Heart left ventricle (tissue), 16 donors: ENCODE measurements at regions of chr2 and their contacts with region 1.

Region 1: DNA sequence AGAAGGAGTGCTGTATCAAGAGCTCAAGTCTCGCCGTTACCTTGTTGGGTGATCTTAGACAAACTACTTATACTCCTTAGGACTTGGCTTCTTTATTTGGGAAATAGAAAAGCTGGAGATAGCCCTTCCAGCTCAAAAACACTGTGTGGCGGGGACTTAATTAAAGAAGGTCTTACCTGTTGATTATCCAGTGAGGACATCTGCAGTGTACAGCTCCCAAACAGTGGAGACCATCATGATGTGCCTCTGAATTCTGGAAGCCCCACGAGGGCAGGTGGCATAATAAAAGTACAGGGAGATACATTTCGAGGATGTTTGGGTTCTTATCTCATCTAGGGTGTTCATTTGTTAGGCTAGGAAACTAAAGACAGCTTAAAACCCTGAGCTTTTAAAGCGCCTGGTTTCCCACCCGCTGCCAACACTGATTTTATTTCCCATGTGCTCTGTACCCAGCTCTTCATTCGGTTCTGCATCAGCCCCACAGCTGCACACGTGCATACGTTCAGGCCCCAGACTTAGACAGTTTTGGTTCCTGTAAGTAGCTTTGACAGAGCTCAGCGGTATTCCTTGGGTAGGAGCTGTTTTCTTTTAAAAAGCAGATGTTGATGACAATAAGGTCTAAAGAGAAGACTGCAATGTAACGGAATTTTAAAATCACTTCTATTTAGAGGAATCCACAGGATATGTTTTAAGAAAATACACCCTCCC is 80.5 kb upstream of the SIX2 start:
- DNase-seq: no peak
- ATAC-seq: no peak
- H3K4me3 ChIP-seq: no peak overlapping the region
- H3K27ac ChIP-seq: no peak overlapping the region
- H3K4me1 ChIP-seq: no peaks in the 10 kb centered on the region
- H3K27me3 ChIP-seq: peaks cover 0 to 12% (median 0%) of the 10 kb centered on the region in 9 donors
- CTCF ChIP-seq: no peak
- POLR2A ChIP-seq: no peak

Region 2: DNA sequence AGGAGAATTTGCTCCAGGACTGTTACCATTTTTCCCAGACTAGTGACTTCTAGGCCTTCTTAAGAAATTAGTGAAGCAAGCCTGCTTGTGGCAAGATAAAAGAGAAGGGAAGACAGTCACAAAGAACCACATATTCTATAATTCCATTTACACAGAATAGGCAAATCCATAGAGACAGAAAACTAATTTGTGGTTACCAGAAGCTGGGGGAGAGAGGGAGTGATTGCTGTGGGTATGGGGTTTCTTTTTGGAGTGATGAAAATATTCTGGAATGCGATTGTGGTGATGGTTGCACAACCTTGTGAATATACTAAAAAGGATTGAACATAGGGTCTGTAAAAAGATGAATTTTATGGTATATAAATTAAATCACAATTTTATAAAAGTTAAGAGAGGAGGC is 42.9 kb before region 1 on chr2:
- intact Hi-C with region 1: loop called in 1 of 10 experiments (anchors 10 kb)
- DNase-seq: no peak
- ATAC-seq: no peak
- H3K4me3 ChIP-seq: no peak overlapping the region
- H3K27ac ChIP-seq: no peak overlapping the region
- H3K4me1 ChIP-seq: no peaks in the 10 kb centered on the region
- H3K27me3 ChIP-seq: peaks cover 0 to 29% (median 0%) of the 10 kb centered on the region in 9 donors
- CTCF ChIP-seq: no peak
- POLR2A ChIP-seq: no peak

Region 3: DNA sequence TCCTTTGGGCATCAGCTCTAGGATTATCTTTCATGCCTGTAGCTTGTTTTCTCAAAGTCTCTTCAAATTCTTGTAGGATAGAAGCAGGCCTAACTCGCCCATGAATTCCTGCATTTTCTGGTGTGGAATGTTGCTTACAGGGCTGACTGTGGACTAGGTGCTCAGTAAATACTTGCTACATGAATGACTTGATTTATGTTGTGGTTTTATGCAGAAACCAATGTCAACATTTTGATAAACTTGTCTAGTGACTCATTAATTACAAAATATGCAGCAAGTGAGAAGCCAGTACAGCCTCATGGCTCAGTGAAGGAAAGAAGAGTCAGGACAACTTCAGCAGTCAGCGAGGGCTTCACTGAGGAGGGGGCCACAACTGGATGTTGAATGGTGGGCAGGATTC is 30.1 kb after region 1 on chr2:
- intact Hi-C with region 1: no loop called
- DNase-seq: no peak
- ATAC-seq: no peak
- H3K4me3 ChIP-seq: no peak overlapping the region
- H3K27ac ChIP-seq: no peak overlapping the region
- H3K4me1 ChIP-seq: no peaks in the 10 kb centered on the region
- H3K27me3 ChIP-seq: no peaks in the 10 kb centered on the region
- CTCF ChIP-seq: no peak
- POLR2A ChIP-seq: no peak

Region 4: DNA sequence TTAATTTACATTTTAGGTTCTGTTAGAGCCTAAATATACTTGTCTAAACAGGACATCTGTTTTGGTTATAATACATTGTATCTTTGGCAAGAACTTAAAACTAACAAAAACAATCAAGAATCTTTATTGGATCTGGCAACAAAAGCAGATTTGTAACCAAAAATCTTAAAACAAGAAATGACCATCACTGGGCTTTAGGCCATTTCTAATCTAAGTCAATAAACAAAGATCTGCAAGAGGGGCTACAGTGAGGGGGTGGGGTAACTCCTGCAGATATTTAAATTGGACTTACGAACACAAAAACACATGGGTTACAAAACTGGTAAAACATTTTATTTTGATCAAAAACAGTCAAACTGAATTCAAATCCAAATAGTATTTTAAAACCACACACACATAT is 444.1 kb after region 1 on chr2:
- intact Hi-C with region 1: no loop called
- DNase-seq: no peak
- ATAC-seq: no peak
- H3K4me3 ChIP-seq: no peak overlapping the region
- H3K27ac ChIP-seq: no peak overlapping the region
- H3K4me1 ChIP-seq: no peaks in the 10 kb centered on the region
- H3K27me3 ChIP-seq: no peaks in the 10 kb centered on the region
- CTCF ChIP-seq: no peak
- POLR2A ChIP-seq: no peak